ENCODE measurements at regions of chr4 and their contacts with region 1.

Region 1: DNA sequence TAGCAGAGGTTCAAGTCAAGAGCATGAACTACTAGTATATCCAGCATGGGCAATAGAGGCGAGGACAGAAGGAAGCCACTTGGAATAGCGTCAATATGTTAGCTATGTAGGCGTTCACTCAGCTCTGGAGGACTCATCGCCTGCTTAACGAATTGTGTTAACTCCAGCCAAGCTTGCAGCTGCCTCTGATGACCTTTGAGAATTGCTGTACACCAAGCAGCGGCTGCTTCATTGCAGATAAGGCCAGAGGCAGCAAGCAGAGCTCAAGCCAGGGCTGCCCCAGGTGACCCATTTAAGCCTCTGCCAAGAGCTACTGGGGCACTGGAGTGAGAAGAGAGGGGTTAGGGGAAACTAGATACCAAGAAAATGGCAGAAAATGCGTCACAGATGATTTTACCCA is 160.2 kb upstream of the IGFBP7 start:
- DNase-seq: peak; percentile 80
- ATAC-seq: peak; percentile 97

Region 2: GRCh38 chr4:56626963-56627362 is 643.4 kb before region 1 on chr4:
- intact Hi-C with region 1: no loop called
- DNase-seq: no peak
- ATAC-seq: no peak

Region 3: GRCh38 chr4:57319878-57320616 is 49.7 kb after region 1 on chr4:
- intact Hi-C with region 1: loop called (anchors 5 kb)
- DNase-seq: no peak
- ATAC-seq: no peak

Region 4: GRCh38 chr4:57333684-57334083 is 63.3 kb after region 1 on chr4:
- intact Hi-C with region 1: no loop called
- DNase-seq: no peak
- ATAC-seq: no peak

Measured in Right ventricle myocardium inferior (tissue), 1 donor.